Spleen (tissue), 13 donors: ENCODE measurements at regions of chr6 and their contacts with region 1.

Region 1: DNA sequence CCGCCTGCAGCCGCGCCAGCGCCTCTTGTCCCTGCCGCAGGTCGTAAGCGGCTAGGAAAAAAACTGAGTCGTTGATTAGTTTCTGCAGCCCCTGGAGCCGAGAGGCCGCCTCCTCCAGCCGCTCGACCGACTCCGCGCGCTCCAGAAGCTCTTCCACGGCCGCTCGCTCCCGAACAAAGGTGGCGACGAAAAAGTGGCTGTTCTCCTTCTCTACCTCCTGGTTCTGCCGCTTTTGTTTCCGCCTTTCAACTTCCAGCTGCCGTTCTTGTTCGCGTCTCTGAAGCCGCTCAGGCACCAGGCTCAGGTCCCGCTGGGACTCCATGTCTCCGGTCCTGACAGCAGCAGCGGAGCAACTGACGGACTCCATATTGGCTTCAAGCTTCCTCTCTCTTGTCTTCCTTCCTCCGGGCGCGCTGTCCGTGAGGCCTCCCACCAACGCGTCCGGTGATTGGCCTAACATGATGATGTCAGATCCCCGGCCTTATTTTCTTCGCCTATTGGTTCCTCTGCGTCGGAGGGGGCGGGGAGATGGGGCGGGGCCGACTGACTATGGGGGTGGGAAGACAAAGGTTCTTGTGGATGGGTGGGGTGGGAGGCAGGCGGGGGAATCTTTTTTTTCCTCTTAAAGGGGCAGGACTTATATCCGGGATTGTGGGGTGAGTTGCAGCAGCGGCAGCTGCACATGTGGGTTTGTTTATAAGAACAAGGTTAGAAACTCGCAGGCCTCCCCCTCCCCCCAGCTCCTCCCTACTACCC is at the start of gene TBCC:
- DNase-seq: peak; percentile 96
- H3K4me3 ChIP-seq: peak within 1 kb of the TSS; percentile 69 to 97 (median 92)
- H3K27ac ChIP-seq: peak within 1 kb of the TSS; percentile 86 to 98 (median 97)
- H3K4me1 ChIP-seq: peaks cover 27 to 71% (median 47%) of the 10 kb centered on the region in 6 donors
- H3K27me3 ChIP-seq: no peaks in the 10 kb centered on the region
- CTCF ChIP-seq: peak in 1 of 11 experiments; percentile 23
- POLR2A ChIP-seq: peak; percentile 83 to 96 (median 90)
- total RNA-seq, gene TBCC: 22.2 to 63.3 (median 25.6) TPM

Region 2: GRCh38 chr6:42604150-42604549 is 141.7 kb before region 1 on chr6:
- intact Hi-C with region 1: no loop called
- DNase-seq: no peak
- H3K4me3 ChIP-seq: no peak overlapping the region
- H3K27ac ChIP-seq: no peak overlapping the region
- H3K4me1 ChIP-seq: peaks cover 0 to 10% (median 0%) of the 10 kb centered on the region in 6 donors
- H3K27me3 ChIP-seq: no peaks in the 10 kb centered on the region
- CTCF ChIP-seq: no peak
- POLR2A ChIP-seq: no peak

Region 3: GRCh38 chr6:42787063-42787472 is 41.2 kb after region 1 on chr6:
- intact Hi-C with region 1: loop called (anchors 5 kb)
- DNase-seq: no peak
- H3K4me3 ChIP-seq: peak overlapping the region in 1 of 8 donors; percentile 17
- H3K27ac ChIP-seq: peak overlapping the region in 7 of 8 donors; percentile 33 to 100 (median 99)
- H3K4me1 ChIP-seq: peaks cover 33 to 80% (median 65%) of the 10 kb centered on the region in 6 donors
- H3K27me3 ChIP-seq: no peaks in the 10 kb centered on the region
- CTCF ChIP-seq: no peak
- POLR2A ChIP-seq: no peak

Region 4: GRCh38 chr6:42879372-42880239 is 133.7 kb after region 1 on chr6 and contains the start of gene RPL7L1:
- intact Hi-C with region 1: loop called (anchors 10 kb)
- DNase-seq: peak; percentile 96
- H3K4me3 ChIP-seq: peak within 1 kb of the TSS; percentile 50 to 76 (median 65)
- H3K27ac ChIP-seq: peak within 1 kb of the TSS; percentile 90 to 97 (median 95)
- H3K4me1 ChIP-seq: peaks cover 20 to 63% (median 43%) of the 10 kb centered on the region in 6 donors
- H3K27me3 ChIP-seq: no peaks in the 10 kb centered on the region
- CTCF ChIP-seq: peak in 10 of 11 experiments; percentile 12 to 52 (median 32)
- POLR2A ChIP-seq: peak in 1 of 3 donors; percentile 69
- total RNA-seq, gene RPL7L1: 63.4 to 92.4 (median 73.0) TPM